AG04449 (cell line): ENCODE measurements at regions of chr22 and their contacts with region 1.

Region 1: DNA sequence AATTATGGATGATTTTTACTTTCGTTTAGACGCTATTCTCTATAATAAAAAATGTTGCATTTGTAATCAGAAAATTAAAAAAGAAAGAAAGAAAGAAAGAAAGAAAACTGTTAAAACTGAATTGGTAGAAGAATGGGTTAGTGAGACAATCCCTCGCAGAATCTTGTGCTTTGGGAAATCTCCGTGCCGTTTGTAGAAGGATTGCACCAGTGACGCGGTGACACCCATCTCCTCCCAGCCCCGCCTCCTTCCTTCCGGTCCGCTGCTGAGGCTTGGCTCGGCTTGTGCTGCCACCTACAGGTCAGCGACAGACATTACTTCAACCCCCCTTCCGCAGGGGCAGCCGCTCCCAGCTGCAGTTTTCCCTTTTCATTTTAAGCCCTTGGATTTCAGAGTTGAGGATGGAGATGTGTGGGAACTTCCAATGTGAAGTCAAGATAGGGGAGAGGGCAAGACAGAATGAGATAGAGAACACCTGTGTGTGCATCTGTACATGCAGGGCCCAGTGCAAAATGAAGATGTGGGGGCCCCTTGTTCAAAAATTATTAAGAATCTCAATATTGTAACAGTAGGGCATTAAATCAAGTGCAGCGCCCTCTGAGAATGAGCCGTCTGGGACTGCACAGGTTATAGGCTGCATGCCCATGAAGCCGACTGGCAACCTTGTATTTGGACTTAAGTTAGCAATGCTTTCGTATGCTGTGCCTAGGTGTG is 41.1 kb downstream of the TST start:
- DNase-seq: peak; percentile 12
- H3K4me3 ChIP-seq: peak overlapping the region; percentile 51
- CTCF ChIP-seq: peak; percentile 97

Region 2: GRCh38 chr22:36775964-36776669 is 202.0 kb before region 1 on chr22 and contains the start of gene IFT27:
- CTCF ChIA-PET with region 1: interaction called, 23 read pairs
- POLR2A ChIA-PET with region 1: no interaction called
- DNase-seq: peak; percentile 100
- H3K4me3 ChIP-seq: peak within 1 kb of the TSS; percentile 88
- CTCF ChIP-seq: no peak

Region 3: GRCh38 chr22:36873680-36874537 is 104.2 kb before region 1 on chr22:
- CTCF ChIA-PET with region 1: interaction called, 31 read pairs
- POLR2A ChIA-PET with region 1: no interaction called
- DNase-seq: no peak
- H3K4me3 ChIP-seq: no peak overlapping the region
- CTCF ChIP-seq: peak; percentile 52

Region 4: GRCh38 chr22:36966851-36967540 is 11.1 kb before region 1 on chr22:
- CTCF ChIA-PET with region 1: interaction called, 72 read pairs
- POLR2A ChIA-PET with region 1: no interaction called
- DNase-seq: no peak
- H3K4me3 ChIP-seq: no peak overlapping the region
- CTCF ChIP-seq: no peak

Region 5: DNA sequence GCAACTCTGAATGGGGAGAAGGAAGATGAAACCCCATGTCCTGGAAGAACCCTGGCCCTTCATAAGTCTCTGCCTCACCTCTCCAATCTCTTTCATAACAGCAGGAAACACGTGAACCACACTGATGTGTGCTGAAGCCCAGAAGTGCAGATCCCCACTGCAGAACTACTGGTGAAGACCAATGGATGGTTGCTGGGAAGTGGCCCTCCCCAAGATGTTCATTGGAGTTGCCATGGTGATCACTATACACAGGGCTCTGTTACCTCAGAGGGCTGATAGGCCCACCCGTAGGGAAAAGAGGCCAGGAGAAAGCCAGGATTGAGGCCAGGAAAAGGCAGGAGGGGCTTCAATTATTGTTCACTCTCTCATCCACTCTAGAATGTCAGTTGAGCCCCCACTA is 29.5 kb after region 1 on chr22:
- CTCF ChIA-PET with region 1: interaction called, 11 read pairs
- POLR2A ChIA-PET with region 1: no interaction called
- DNase-seq: no peak
- H3K4me3 ChIP-seq: no peak overlapping the region
- CTCF ChIP-seq: no peak